ENCODE measurements at regions of chr1 and their contacts with region 1.

Region 1: DNA sequence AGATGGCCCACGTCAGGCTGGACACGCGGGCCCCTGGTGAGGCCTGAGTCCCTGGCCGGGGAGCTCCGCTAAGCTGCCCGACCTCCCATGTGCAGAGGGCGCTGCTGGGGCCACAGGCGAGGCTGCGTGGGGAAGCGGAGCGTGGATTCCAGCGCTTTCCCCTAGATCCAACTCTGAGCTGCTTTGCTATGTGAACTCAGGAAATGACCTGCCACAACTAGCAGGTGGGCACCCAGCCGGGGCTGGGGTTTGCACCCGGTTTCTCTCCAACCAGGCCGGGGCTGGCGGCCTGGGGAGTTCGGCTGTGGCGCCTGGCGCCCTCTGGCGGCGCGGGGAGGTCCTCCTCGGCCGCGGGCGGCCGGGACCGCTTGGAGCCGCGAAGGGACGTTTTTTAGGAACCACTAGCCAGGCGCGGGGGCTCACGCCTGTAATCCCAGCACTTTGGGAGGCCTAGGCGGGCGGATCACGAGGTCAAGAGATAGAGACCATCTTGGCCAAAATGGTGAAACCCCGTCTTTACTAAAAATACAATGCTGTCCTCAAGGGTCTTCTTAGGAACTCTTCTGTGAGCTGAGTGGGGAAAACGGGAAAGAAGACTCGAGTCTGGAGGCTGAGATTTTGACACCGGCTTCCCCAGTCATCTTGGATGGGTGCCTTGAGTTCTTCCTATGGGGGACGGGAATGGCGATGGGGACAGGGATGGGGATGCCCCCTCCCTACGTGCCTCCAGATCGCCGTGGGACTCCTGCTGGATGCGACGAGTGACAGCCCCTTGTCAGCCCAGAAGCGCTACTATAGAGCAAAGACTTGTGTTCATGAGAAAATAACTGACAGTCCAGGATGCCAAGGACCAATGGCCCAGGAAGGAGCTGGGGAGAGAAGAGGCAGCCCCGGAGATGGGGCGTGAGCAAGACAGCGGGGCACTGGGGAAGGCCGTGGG is 12.6 kb downstream of the PYCR2 start:
- DNase-seq: no peak
- H3K4me3 ChIP-seq: 0 out of 2 replicates have a peak overlapping the region, but pooled peaks have one; percentile 10
- H3K27ac ChIP-seq: no peak overlapping the region
- H3K27me3 ChIP-seq: no peaks in the 10 kb centered on the region
- CTCF ChIP-seq: peak; percentile 76

Region 2: GRCh38 chr1:225441314-225442122 is 469.9 kb before region 1 on chr1:
- CTCF ChIA-PET with region 1: interaction called, 12 read pairs
- POLR2A ChIA-PET with region 1: no interaction called
- DNase-seq: no peak
- H3K4me3 ChIP-seq: no peak overlapping the region
- H3K27ac ChIP-seq: no peak overlapping the region
- H3K27me3 ChIP-seq: no peaks in the 10 kb centered on the region
- CTCF ChIP-seq: peak; percentile 39

Region 3: GRCh38 chr1:225881969-225882693 is 29.3 kb before region 1 on chr1 and contains the start of gene TMEM63A:
- CTCF ChIA-PET with region 1: interaction called, 11 read pairs
- POLR2A ChIA-PET with region 1: no interaction called
- DNase-seq: peak; percentile 52
- H3K4me3 ChIP-seq: peak within 1 kb of the TSS; percentile 89
- H3K27ac ChIP-seq: peak within 1 kb of the TSS; percentile 31
- H3K27me3 ChIP-seq: no peaks in the 10 kb centered on the region
- CTCF ChIP-seq: peak; percentile 19; the same call in 1 of the 2 replicates
- polyA plus RNA-seq, gene TMEM63A: 16.8 and 17.1 TPM in 2 replicates

Region 4: GRCh38 chr1:225923692-225924555 is 12.5 kb after region 1 on chr1 and contains the start of gene PYCR2:
- CTCF ChIA-PET with region 1: interaction called, 21 read pairs
- POLR2A ChIA-PET with region 1: no interaction called
- DNase-seq: peak; percentile 91
- H3K4me3 ChIP-seq: peak within 1 kb of the TSS; percentile 89
- H3K27ac ChIP-seq: peak within 1 kb of the TSS; percentile 81
- H3K27me3 ChIP-seq: no peaks in the 10 kb centered on the region
- CTCF ChIP-seq: no peak; the same call in 1 of the 2 replicates
- polyA plus RNA-seq, gene PYCR2: 29.4 and 37.5 TPM in 2 replicates

Region 5: DNA sequence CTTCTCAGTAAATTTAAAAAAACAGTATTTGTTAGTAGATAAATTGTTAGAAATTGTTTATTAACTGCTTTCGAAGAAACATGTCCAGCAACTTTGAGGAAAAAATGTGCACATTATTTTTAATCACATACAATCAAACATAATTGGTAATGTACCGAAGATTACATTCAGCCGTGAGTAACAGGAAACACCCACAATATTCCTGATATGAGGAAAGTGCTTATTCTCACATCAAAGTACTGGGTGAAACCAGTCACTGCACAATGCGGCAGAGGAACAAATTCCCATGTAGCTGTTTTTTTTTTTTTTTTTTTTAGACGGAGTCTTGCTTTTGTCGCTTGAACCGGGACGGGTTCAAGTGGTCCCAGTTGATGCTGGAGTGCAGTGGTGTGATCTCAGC is 265.4 kb after region 1 on chr1:
- CTCF ChIA-PET with region 1: no interaction called
- POLR2A ChIA-PET with region 1: no interaction called
- DNase-seq: no peak
- H3K4me3 ChIP-seq: no peak overlapping the region
- H3K27ac ChIP-seq: no peak overlapping the region
- H3K27me3 ChIP-seq: no peaks in the 10 kb centered on the region
- CTCF ChIP-seq: no peak

Measured in AG04450 (cell line).